Colonic mucosa (tissue), 4 donors: ENCODE measurements at regions of chr5 and their contacts with region 1.

Region 1: DNA sequence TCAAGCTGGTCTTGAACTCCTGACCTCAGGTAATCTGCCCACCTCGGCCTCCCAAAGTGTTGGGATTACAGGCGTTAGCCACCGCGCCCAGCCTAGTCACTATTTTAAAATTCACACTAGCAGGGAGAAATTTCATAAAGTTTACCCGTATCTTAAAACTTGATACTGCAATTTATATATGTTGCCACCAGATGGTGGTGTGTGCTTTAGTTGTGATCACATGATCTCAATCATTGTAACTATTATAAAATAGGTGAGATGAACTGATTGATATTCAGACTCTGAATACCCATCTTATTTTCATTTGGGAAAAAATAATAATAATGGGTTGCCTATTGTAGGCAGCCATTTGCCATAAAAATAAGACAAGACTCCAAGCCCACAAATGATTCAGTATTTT is 1330.4 kb upstream of the WWC1 start:
- DNase-seq: no peak
- H3K4me3 ChIP-seq: no peak overlapping the region
- H3K27ac ChIP-seq: no peak overlapping the region
- H3K4me1 ChIP-seq: no peaks in the 10 kb centered on the region
- H3K27me3 ChIP-seq: no peaks in the 10 kb centered on the region
- CTCF ChIP-seq: peak; percentile 16

Region 2: DNA sequence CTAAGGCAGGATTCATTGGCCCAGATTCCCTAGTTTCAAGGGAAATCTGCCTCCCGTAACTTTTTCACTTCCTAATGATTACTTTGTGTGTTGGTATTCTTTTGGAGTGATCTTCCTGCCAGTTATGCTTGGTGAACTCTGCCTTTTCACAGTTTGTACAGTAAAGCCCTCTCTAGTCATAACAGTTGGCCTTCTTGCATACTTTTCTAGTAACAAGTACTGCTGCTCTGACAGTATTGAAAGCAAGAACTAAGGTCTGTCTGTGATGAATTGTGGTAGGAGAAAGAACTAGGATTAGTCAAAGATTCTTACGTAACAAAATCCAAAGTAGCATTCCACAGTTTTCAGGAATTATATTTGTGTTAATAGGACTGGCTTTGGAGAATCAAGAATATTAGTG is 126.8 kb before region 1 on chr5:
- intact Hi-C with region 1: no loop called
- DNase-seq: no peak
- H3K4me3 ChIP-seq: no peak overlapping the region
- H3K27ac ChIP-seq: no peak overlapping the region
- H3K4me1 ChIP-seq: no peaks in the 10 kb centered on the region
- H3K27me3 ChIP-seq: no peaks in the 10 kb centered on the region
- CTCF ChIP-seq: no peak

Region 3: GRCh38 chr5:167049043-167049663 is 88.1 kb after region 1 on chr5:
- intact Hi-C with region 1: loop called (anchors 5 kb)
- DNase-seq: peak; percentile 49
- H3K4me3 ChIP-seq: no peak overlapping the region
- H3K27ac ChIP-seq: no peak overlapping the region
- H3K4me1 ChIP-seq: no peaks in the 10 kb centered on the region
- H3K27me3 ChIP-seq: no peaks in the 10 kb centered on the region
- CTCF ChIP-seq: peak; percentile 53

Region 4: DNA sequence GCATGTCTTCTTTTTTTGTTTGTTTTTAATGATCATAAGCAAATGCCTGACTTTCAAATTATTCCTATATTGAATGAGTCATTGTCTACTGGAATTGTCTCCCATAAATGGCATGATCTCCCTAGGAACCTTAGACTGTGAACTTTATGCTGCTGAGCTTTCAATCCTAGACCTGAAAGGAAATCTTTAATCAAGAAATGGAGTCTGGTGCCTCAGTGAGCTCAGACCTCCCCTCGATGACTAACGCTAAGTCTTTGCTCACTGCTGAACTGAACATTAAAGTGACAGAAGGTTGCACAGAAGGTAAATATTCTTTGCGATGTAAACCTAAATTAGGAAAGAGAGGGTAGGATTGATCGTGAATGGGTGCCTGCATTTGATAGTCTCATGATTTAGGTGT is 585.2 kb after region 1 on chr5:
- intact Hi-C with region 1: no loop called
- DNase-seq: no peak
- H3K4me3 ChIP-seq: no peak overlapping the region
- H3K27ac ChIP-seq: no peak overlapping the region
- H3K4me1 ChIP-seq: no peaks in the 10 kb centered on the region
- H3K27me3 ChIP-seq: no peaks in the 10 kb centered on the region
- CTCF ChIP-seq: no peak